Mammary epithelial cell (primary cell): ENCODE measurements at regions of chr5 and their contacts with region 1.

Region 1: GRCh38 chr5:172764849-172765765 is 5.9 kb downstream of the DUSP1 start:
- DNase-seq: peak; percentile 99
- H3K4me3 ChIP-seq: peak overlapping the region; percentile 16 to 52 (median 38)
- H3K27ac ChIP-seq: peak overlapping the region; percentile 95
- H3K4me1 ChIP-seq: peaks cover 42% of the 10 kb centered on the region
- H3K27me3 ChIP-seq: no peaks in the 10 kb centered on the region
- CTCF ChIP-seq: no peak

Region 2: GRCh38 chr5:172733131-172733973 is 31.8 kb before region 1 on chr5:
- CTCF ChIA-PET with region 1: no interaction called
- dilution Hi-C with region 1: no loop called
- in situ Hi-C with region 1: loop called in 1 of 2 experiments (anchors 5 kb)
- intact Hi-C with region 1: loop called (anchors 1 kb)
- DNase-seq: peak; percentile 100
- H3K4me3 ChIP-seq: no peak overlapping the region
- H3K27ac ChIP-seq: peak overlapping the region; percentile 100
- H3K4me1 ChIP-seq: peaks cover 31% of the 10 kb centered on the region
- H3K27me3 ChIP-seq: no peaks in the 10 kb centered on the region
- CTCF ChIP-seq: no peak

Region 3: GRCh38 chr5:172740428-172741201 is 24.5 kb before region 1 on chr5:
- CTCF ChIA-PET with region 1: no interaction called
- dilution Hi-C with region 1: no loop called
- in situ Hi-C with region 1: no loop called
- intact Hi-C with region 1: loop called (anchors 1 kb)
- DNase-seq: peak; percentile 92
- H3K4me3 ChIP-seq: no peak overlapping the region
- H3K27ac ChIP-seq: peak overlapping the region; percentile 87
- H3K4me1 ChIP-seq: peaks cover 13% of the 10 kb centered on the region
- H3K27me3 ChIP-seq: no peaks in the 10 kb centered on the region
- CTCF ChIP-seq: no peak

Region 4: GRCh38 chr5:172868924-172869591 is 104.0 kb after region 1 on chr5:
- CTCF ChIA-PET with region 1: no interaction called
- dilution Hi-C with region 1: no loop called
- in situ Hi-C with region 1: loop called in 1 of 2 experiments (anchors 10 kb)
- intact Hi-C with region 1: loop called (anchors 1 kb)
- DNase-seq: peak; percentile 76
- H3K4me3 ChIP-seq: no peak overlapping the region
- H3K27ac ChIP-seq: peak overlapping the region; percentile 86
- H3K4me1 ChIP-seq: peaks cover 58% of the 10 kb centered on the region
- H3K27me3 ChIP-seq: no peaks in the 10 kb centered on the region
- CTCF ChIP-seq: peak in 1 of 2 donors; percentile 35